T-cell (primary cell): ENCODE measurements at regions of chr6 and their contacts with region 1.

Region 1: DNA sequence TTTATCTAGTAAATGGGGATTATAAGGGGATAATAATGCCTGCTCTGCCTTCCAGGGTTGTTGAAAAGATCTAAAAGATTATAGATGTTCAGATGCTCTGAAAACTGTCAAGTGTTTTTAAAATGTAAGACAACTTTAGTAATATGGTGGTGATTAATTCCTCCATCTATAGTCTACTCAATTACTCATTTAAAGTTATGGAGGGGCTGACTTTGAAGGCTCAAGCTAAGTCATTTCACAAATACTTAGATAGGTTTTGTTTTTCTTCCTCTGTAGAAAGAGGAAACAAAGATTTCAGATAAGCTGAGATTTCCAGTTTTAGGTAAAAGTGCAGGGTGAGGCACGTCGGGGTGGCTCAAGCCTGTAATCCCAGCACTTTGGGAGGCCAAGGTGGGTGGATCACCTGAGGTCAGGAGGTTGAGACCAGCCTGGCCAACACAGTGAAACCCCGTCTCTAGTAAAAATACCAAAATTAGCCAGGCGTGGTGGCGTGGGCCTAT is 50.5 kb upstream of the PIM1 start:
- DNase-seq: no peak
- ATAC-seq: no peak
- H3K4me3 ChIP-seq: no peak overlapping the region
- H3K4me3 Mint-ChIP-seq: no peak overlapping the region
- H3K27ac ChIP-seq: no peak overlapping the region
- H3K27ac Mint-ChIP-seq: no peak overlapping the region
- H3K4me1 ChIP-seq: no peaks in the 10 kb centered on the region
- H3K4me1 Mint-ChIP-seq: peaks cover 3 to 7% (median 4%) of the 10 kb centered on the region in 3 donors
- H3K27me3 ChIP-seq: peaks cover 0 to 6% of the 10 kb centered on the region in 2 experiments
- H3K27me3 Mint-ChIP-seq: peaks cover 2 to 4% of the 10 kb centered on the region in 2 donors

Region 2: DNA sequence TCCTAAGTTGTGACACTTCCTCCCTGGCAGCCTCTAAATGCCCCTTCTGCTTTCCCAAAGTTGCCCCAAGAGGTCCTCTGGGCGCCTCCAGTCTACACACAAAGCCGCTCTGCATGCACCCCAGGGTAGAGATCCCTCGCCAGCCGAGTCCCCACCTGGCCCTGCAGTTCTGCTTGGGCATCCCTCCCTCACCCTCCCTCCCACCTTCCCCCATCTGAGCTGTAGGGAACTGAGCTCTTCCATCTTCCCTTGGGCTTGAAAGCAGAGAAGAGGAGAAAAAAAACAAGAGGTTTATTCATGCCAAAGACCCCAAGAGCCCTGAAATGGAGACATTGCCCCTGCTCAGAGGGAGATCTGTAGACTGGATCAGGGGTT is 119.7 kb before region 1 on chr6:
- CTCF ChIA-PET with region 1: no interaction called
- POLR2A ChIA-PET with region 1: interaction called in 1 of 2 experiments, 11 read pairs
- DNase-seq: no peak
- ATAC-seq: no peak
- H3K4me3 ChIP-seq: no peak overlapping the region
- H3K4me3 Mint-ChIP-seq: no peak overlapping the region
- H3K27ac ChIP-seq: no peak overlapping the region
- H3K27ac Mint-ChIP-seq: no peak overlapping the region
- H3K4me1 ChIP-seq: no peaks in the 10 kb centered on the region
- H3K4me1 Mint-ChIP-seq: peaks cover 0 to 3% (median 0%) of the 10 kb centered on the region in 3 donors
- H3K27me3 ChIP-seq: peaks cover 0 to 22% of the 10 kb centered on the region in 2 experiments
- H3K27me3 Mint-ChIP-seq: peaks cover 3 to 5% of the 10 kb centered on the region in 2 donors

Region 3: GRCh38 chr6:37074053-37074827 is 45.2 kb before region 1 on chr6:
- CTCF ChIA-PET with region 1: no interaction called
- POLR2A ChIA-PET with region 1: no interaction called
- DNase-seq: no peak
- ATAC-seq: no peak
- H3K4me3 ChIP-seq: no peak overlapping the region
- H3K4me3 Mint-ChIP-seq: no peak overlapping the region
- H3K27ac ChIP-seq: no peak overlapping the region
- H3K27ac Mint-ChIP-seq: peak overlapping the region in 1 of 2 donors; percentile 6
- H3K4me1 ChIP-seq: peaks cover 0 to 21% of the 10 kb centered on the region in 2 experiments
- H3K4me1 Mint-ChIP-seq: peaks cover 18 to 22% (median 19%) of the 10 kb centered on the region in 3 donors
- H3K27me3 ChIP-seq: peaks cover 0 to 5% of the 10 kb centered on the region in 2 experiments
- H3K27me3 Mint-ChIP-seq: no peaks in the 10 kb centered on the region